ENCODE measurements at regions of chr5 and their contacts with region 1.

Region 1: DNA sequence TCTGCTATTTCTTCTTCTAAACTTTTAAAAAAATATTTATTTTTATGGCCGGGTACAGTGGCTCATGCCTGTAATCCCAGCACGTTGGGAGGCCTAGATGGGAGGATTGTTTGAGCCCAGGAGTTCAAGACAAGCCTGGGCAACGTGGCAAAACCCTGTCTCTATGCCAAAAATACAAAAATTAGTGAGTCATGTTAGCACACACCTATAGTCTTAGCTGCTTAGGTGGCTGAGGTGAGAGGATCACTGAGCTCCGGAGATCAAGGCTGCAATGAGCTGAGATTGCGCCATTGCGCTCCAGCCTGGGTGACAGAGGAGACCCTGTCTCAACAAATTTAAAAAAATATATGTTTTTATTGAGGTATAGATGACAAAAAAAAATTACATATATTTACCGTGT is 5.6 kb downstream of the AP3S1 start:
- DNase-seq: no peak
- H3K4me3 ChIP-seq: no peak overlapping the region
- H3K27ac ChIP-seq: no peak overlapping the region
- H3K4me1 ChIP-seq: peaks cover 0 to 21% of the 10 kb centered on the region in 2 donors
- H3K27me3 ChIP-seq: no peaks in the 10 kb centered on the region
- CTCF ChIP-seq: no peak

Region 2: DNA sequence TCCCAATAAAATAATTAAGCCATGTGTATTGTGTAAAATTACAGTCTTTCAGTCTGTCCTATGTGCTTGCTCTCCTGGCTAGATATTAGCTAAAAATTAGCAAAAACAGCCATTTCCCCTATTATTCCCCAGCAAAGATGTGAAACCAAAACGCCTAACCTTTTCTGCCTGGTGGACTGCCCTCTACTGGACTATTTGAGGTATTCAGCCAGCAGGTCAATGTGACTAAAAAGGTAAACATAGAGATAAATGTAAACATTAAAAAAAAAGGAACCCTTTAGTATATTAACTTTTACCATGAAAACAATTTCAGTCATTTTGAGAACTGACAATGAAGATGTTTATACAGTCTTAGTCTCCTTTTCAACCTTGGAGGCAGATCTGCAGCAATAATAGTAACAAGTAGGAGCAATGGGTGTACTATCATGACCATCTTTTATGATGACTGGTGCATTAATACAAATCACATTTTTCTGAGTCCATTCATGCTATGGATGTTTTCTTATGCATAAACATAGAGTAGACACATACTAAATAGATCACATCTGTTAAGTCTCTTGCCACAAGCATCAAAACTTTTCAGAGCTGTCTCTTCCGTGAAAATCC is 16.0 kb before region 1 on chr5:
- intact Hi-C with region 1: no loop called
- DNase-seq: no peak
- H3K4me3 ChIP-seq: no peak overlapping the region
- H3K27ac ChIP-seq: no peak overlapping the region
- H3K4me1 ChIP-seq: peaks cover 0 to 3% of the 10 kb centered on the region in 2 donors
- H3K27me3 ChIP-seq: no peaks in the 10 kb centered on the region
- CTCF ChIP-seq: peak; percentile 48 to 79 (median 75)

Region 3: GRCh38 chr5:115948091-115948534 is 100.8 kb after region 1 on chr5:
- intact Hi-C with region 1: no loop called
- DNase-seq: no peak
- H3K4me3 ChIP-seq: no peak overlapping the region
- H3K27ac ChIP-seq: no peak overlapping the region
- H3K4me1 ChIP-seq: no peaks in the 10 kb centered on the region
- H3K27me3 ChIP-seq: no peaks in the 10 kb centered on the region
- CTCF ChIP-seq: no peak

Region 4: DNA sequence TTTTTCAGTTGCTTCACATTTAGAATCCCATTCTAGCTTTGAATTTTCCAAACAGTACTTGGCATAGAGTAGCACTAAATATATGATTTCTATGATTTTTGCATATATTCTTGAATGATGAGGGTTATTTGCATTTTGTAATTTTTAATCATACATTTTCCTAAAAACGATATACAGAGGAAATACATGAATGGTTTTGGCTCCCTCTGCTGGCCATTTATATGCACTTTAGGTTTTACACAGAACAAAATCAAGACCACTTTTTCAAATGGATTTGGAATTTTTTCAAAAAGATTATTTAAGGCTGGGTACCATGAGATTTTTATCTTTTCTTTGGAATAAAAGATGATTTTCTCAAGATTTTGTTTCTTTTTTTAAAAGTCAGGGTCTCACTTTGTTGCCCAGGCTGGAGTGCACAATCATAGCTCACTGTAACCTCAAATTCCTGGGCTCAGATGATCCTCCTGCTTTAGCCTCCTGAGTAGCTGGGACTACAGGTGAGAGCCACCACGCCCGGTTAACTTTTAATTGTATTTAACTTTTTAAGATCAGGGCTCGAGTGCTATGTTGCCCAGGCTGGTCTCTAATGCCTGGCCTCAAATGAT is 220.8 kb after region 1 on chr5:
- intact Hi-C with region 1: loop called (anchors 5 kb)
- DNase-seq: no peak
- H3K4me3 ChIP-seq: no peak overlapping the region
- H3K27ac ChIP-seq: no peak overlapping the region
- H3K4me1 ChIP-seq: no peaks in the 10 kb centered on the region
- H3K27me3 ChIP-seq: no peaks in the 10 kb centered on the region
- CTCF ChIP-seq: peak; percentile 39 to 84 (median 77)